Activated CD4-positive, alpha-beta T cell treated with anti-CD3 and anti-CD28 coated beads for 36 hours (primary cell): ENCODE measurements at regions of chr13 and their contacts with region 1.

Region 1: GRCh38 chr13:49278211-49278610 is 30.5 kb downstream of the CDADC1 start:
- DNase-seq: no peak
- ATAC-seq: no peak
- H3K4me3 Mint-ChIP-seq: no peak overlapping the region
- H3K27ac Mint-ChIP-seq: no peak overlapping the region
- H3K4me1 Mint-ChIP-seq: no peaks in the 10 kb centered on the region
- H3K27me3 Mint-ChIP-seq: no peaks in the 10 kb centered on the region

Region 2: DNA sequence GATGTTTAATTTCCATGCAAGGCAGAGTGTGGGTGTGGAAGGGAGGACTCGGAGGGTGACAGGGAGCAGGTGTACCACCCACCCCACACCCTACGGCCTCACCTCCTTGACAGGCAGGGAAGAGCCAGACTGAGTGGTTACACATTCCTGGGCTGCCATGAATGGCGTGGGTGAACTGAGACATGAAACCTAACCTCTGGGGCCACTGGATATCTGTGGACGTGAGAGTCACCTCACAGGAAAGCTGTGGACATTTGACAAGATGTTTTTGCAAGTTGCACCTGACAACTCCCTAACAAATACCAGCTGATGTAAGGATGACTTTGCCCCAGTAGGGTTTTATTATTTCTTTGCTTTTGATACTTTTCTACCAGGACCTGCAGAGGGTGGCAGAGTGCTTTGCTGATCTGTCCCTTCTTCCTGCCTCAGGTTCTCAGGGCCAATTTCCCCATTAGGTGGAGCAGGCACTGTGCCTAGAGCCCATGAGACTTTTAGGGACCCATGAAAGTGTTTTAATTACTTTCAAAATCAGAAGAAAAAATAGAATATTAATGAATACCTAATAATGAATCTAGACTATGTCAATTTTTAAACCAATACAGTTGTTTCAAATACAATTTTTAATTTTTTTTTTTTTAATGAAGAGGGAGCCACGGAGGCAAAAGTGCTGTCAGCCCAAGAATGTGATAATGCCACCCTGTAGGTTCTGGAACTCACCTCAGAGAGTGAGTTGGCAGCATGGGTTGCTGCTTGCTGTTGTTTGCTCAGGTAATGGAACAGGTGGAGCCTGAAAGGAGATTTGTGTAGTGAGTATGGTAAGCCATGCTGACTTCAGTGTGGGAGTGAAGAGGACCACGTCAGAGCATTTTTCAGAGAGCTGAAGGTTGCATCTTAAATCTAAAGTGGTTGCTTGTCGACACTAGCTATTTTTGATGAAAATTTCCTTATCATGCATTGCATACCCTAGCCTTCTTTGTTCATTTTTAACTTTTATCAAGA is 682.5 kb before region 1 on chr13:
- CTCF ChIA-PET with region 1: no interaction called
- POLR2A ChIA-PET with region 1: no interaction called
- intact Hi-C with region 1: loop called in 1 of 2 experiments (anchors 2 kb)
- DNase-seq: peak; percentile 71
- ATAC-seq: peak; percentile 87
- H3K4me3 Mint-ChIP-seq: no peak overlapping the region
- H3K27ac Mint-ChIP-seq: no peak overlapping the region
- H3K4me1 Mint-ChIP-seq: peaks cover 6% of the 10 kb centered on the region
- H3K27me3 Mint-ChIP-seq: peaks cover 3% of the 10 kb centered on the region

Region 3: DNA sequence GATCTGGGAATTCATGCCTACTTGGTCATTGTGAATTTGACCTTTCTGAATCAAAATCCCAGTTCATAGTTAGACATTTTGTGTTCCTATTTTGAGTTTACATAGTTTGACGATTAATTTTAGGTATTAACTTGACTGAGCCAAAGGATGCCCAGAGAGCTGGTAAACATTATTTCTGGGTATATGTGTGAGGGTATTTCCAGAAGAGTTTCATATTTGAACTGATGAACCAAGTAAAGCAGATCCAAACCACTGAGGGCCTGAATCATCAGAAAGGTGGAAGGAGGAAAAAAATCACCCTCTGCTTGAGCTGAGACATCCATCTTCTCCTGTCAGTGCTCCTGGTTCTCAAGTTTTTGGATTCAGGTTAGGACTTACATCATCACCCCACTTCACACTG is 507.8 kb before region 1 on chr13:
- CTCF ChIA-PET with region 1: no interaction called
- POLR2A ChIA-PET with region 1: no interaction called
- intact Hi-C with region 1: no loop called
- DNase-seq: no peak
- ATAC-seq: peak; percentile 69
- H3K4me3 Mint-ChIP-seq: no peak overlapping the region
- H3K27ac Mint-ChIP-seq: no peak overlapping the region
- H3K4me1 Mint-ChIP-seq: peaks cover 19% of the 10 kb centered on the region
- H3K27me3 Mint-ChIP-seq: peaks cover 29% of the 10 kb centered on the region

Region 4: DNA sequence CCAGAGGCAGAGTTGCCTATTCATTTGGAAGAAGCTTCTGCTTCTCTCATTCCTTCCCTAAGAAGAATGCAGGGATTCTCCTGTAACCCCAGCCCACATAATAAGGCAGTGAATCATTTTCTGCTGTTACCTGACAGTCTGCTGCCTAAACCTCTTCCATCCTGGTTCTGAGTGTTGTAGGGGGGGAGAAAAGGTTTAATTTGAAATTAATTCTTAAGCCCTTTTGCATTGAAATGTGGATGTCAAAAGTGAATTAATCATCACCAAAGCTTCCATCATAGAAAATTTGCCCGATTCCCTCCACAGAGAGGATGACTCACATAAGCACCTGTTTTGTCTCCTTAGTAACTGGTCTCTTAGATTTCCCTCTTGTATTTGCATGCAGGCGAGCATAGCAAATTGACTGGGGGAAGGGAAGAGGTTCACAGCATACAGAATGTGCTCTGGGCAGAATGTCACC is 449.2 kb before region 1 on chr13:
- CTCF ChIA-PET with region 1: no interaction called
- POLR2A ChIA-PET with region 1: no interaction called
- intact Hi-C with region 1: no loop called
- DNase-seq: peak; percentile 24
- ATAC-seq: peak; percentile 72
- H3K4me3 Mint-ChIP-seq: no peak overlapping the region
- H3K27ac Mint-ChIP-seq: no peak overlapping the region
- H3K4me1 Mint-ChIP-seq: peaks cover 43% of the 10 kb centered on the region
- H3K27me3 Mint-ChIP-seq: no peaks in the 10 kb centered on the region

Region 5: GRCh38 chr13:49098771-49099512 is 179.3 kb before region 1 on chr13:
- CTCF ChIA-PET with region 1: interaction called, 4 read pairs
- POLR2A ChIA-PET with region 1: no interaction called
- intact Hi-C with region 1: loop called in 1 of 2 experiments (anchors 1 kb)
- DNase-seq: no peak
- ATAC-seq: no peak
- H3K4me3 Mint-ChIP-seq: no peak overlapping the region
- H3K27ac Mint-ChIP-seq: no peak overlapping the region
- H3K4me1 Mint-ChIP-seq: peaks cover 21% of the 10 kb centered on the region
- H3K27me3 Mint-ChIP-seq: no peaks in the 10 kb centered on the region

Region 6: GRCh38 chr13:49240017-49240416 is 38.2 kb before region 1 on chr13:
- CTCF ChIA-PET with region 1: interaction called, 24 read pairs
- POLR2A ChIA-PET with region 1: no interaction called
- intact Hi-C with region 1: loop called (anchors 1 kb)
- DNase-seq: peak; percentile 65
- ATAC-seq: peak; percentile 97
- H3K4me3 Mint-ChIP-seq: no peak overlapping the region
- H3K27ac Mint-ChIP-seq: no peak overlapping the region
- H3K4me1 Mint-ChIP-seq: no peaks in the 10 kb centered on the region
- H3K27me3 Mint-ChIP-seq: peaks cover 4% of the 10 kb centered on the region